Activated T-helper 1 cell treated with anti-CD3 and anti-CD28 coated beads, Interleukin-12 subunit alpha, Interleukin-12 subunit beta, Interleukin-2, Interleukin-4 antibody, amounts not matched to agents 30 ng/mL and 10 ng/mL and 1 ng/mL, durations not matched to agents 14 hours and 24 hours and 36 hours (primary cell): ENCODE measurements at regions of chr5 and their contacts with region 1.

Region 1: GRCh38 chr5:34929150-34929719 is at the start of gene DNAJC21:
- DNase-seq: peak; percentile 97
- H3K4me3 Mint-ChIP-seq: peak within 1 kb of the TSS; percentile 98
- H3K27ac Mint-ChIP-seq: peak within 1 kb of the TSS; percentile 95
- H3K4me1 Mint-ChIP-seq: peaks cover 45% of the 10 kb centered on the region
- H3K27me3 Mint-ChIP-seq: no peaks in the 10 kb centered on the region
- total RNA-seq, gene DNAJC21: 64.0 and 67.8 TPM in 2 replicates

Region 2: DNA sequence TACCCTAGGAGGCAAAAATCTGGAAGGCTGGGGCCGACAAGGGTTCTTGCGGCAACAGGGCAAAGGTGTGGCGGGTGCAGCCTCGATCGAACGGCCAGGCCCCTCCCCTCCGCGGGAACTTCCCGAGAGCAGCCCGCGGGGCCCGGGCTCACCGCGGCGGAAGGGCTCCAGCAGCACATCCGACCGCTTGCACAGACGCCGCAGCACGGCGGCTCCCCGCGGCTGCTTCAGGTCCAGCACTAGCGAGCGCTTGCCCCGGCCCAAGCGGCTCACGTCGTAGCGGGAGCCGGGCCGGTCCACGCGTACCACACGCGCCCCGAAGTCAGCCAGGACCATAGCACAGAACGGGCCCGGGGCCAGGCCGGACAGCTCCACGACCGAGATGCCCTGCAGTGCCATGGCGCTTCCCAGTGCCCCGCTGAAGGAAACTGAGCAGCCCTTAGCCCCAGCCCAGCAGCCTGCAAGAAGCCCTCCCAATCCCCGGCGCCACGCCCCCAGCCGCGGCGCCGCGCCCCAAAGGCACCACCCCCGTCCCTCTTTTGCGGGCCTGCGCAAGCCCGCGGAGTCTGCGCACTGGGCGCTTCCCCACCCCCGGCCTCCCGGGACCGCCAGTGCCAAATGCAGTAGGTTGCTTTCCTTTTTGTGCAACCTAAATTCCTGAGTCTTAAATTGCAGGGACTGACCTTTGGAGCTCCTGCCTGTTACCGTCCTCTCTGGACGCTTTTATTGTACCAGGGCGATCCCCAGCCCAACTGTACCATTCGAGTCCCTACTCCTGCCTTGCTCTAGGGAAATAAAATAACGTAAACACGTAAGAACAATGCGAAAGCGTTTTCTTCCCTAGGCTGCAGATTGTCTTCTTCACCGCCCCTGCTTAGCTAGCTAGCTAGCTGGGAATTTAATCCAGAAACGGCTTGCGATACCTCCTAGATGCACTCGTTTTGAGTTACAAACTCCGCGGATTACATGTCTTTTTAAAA is 921.3 kb before region 1 on chr5 and contains the start of gene AMACR:
- intact Hi-C with region 1: loop called (anchors 5 kb)
- DNase-seq: peak; percentile 87
- H3K4me3 Mint-ChIP-seq: peak within 1 kb of the TSS; percentile 85
- H3K27ac Mint-ChIP-seq: peak within 1 kb of the TSS; percentile 79
- H3K4me1 Mint-ChIP-seq: peaks cover 33% of the 10 kb centered on the region
- H3K27me3 Mint-ChIP-seq: no peaks in the 10 kb centered on the region
- total RNA-seq, gene AMACR: 6.8 and 7.1 TPM in 2 replicates

Region 3: GRCh38 chr5:34891981-34892380 is 37.3 kb before region 1 on chr5:
- intact Hi-C with region 1: no loop called
- DNase-seq: no peak
- H3K4me3 Mint-ChIP-seq: no peak overlapping the region
- H3K27ac Mint-ChIP-seq: no peak overlapping the region
- H3K4me1 Mint-ChIP-seq: no peaks in the 10 kb centered on the region
- H3K27me3 Mint-ChIP-seq: no peaks in the 10 kb centered on the region

Region 4: GRCh38 chr5:34915139-34915855 is 13.9 kb before region 1 on chr5 and contains the starts of genes BRIX1 and RAD1:
- intact Hi-C with region 1: loop called (anchors 1 kb)
- DNase-seq: peak; percentile 94
- H3K4me3 Mint-ChIP-seq: no peak within 1 kb of the TSS
- H3K27ac Mint-ChIP-seq: peak within 1 kb of the TSS; percentile 74
- H3K4me1 Mint-ChIP-seq: peaks cover 35% of the 10 kb centered on the region
- H3K27me3 Mint-ChIP-seq: no peaks in the 10 kb centered on the region
- total RNA-seq, gene BRIX1: 110 TPM in 2 replicates
- total RNA-seq, gene RAD1: 45.7 and 47.1 TPM in 2 replicates

Region 5: DNA sequence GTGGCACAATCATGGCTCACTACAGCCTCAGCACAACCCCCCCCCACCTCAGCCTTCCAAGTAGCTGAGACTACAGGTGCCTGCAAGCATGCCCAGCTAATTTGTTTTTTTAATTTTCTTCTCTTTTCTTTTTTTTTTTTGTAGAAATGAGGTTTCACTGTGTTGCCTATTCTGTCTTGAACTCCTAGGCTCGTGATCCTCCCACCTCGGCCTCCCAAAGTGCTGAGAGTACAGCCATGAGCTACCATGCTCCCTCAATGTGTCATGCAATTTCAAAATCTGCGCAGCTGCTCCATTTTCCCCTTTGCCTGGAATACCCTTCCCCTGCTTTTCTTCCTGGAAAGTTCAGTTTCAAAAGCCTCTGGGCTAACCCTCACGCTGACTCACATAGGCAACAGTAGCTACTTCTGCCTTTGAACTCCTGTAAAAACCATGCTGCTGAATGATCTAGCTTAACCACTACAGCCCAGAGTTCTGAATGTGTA is 856.4 kb after region 1 on chr5:
- intact Hi-C with region 1: loop called (anchors 10 kb)
- DNase-seq: peak; percentile 30
- H3K4me3 Mint-ChIP-seq: peak overlapping the region; percentile 24
- H3K27ac Mint-ChIP-seq: peak overlapping the region; percentile 86
- H3K4me1 Mint-ChIP-seq: peaks cover 90% of the 10 kb centered on the region
- H3K27me3 Mint-ChIP-seq: no peaks in the 10 kb centered on the region

Region 6: GRCh38 chr5:36151434-36152323 is 1222.4 kb after region 1 on chr5 and contains the starts of genes LMBRD2 and SKP2:
- intact Hi-C with region 1: loop called (anchors 1 kb)
- DNase-seq: peak; percentile 97
- H3K4me3 Mint-ChIP-seq: peak within 1 kb of the TSS; percentile 97
- H3K27ac Mint-ChIP-seq: peak within 1 kb of the TSS; percentile 79
- H3K4me1 Mint-ChIP-seq: peaks cover 59% of the 10 kb centered on the region
- H3K27me3 Mint-ChIP-seq: no peaks in the 10 kb centered on the region
- total RNA-seq, gene LMBRD2: 8.9 and 12.3 TPM in 2 replicates
- total RNA-seq, gene SKP2: 54.6 and 61.2 TPM in 2 replicates